Dorsolateral prefrontal cortex (tissue), 120 donors: ENCODE measurements at regions of chr22 and their contacts with region 1.

Region 1: DNA sequence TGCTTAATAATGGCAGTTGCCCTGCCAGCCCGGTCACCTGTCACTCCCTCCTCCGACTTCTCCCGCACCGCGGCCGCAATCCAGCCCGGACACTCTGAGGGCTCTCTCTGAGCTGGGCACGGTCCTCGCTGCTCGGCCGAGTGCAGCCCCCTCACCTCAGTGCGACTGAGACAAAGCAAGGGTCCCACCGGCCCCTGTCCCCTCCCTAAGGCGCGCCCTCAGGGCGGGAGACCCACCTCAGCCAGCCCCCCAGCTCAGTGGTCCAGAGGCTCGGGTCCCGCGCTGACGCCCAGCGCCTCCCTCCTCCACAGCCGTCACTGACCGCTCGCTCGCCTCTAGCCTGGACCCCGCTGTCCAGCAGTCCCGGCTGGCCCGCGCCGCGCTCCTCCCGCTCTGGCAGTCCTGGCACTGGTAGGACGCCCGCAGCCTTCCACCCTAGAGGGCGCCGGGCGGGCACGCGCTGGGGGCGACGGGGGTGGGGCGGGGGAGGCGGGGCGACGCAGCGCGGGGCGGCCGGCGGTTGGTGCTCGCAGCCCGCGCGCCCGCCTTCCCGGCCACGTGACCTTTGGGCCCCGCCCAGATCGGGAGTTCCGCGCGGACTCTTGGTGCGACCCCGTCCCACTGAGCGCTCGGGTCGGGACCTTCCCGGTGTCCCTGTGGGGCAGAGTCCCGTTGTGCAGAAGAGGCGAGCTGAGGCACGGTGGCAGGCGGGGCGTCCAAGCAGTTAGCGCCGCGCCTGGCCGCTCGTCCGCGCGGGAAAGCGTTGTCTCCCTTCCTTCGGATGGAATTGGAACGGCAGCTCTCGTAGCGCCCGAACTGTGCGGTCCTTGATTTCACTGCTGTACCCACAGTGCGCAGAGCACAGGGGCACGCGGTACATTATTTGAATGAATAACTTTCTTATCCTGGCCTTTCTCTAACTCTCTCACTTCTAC is 7.8 kb upstream of the L3MBTL2 start:
- DNase-seq: peak; percentile 70 to 91 (median 84)
- H3K4me3 ChIP-seq: peak overlapping the region; percentile 72 to 100 (median 90)
- H3K27ac ChIP-seq: peak overlapping the region in 28 of 59 donors; percentile 17 to 75 (median 52)
- H3K27me3 ChIP-seq: no peaks in the 10 kb centered on the region
- CTCF ChIP-seq: peak in 38 of 56 donors; percentile 5 to 72 (median 40)

Region 2: GRCh38 chr22:40950962-40951794 is 246.1 kb before region 1 on chr22 and contains the start of gene RBX1:
- intact Hi-C with region 1: loop called in 1 of 2 experiments (anchors 10 kb)
- DNase-seq: peak; percentile 96 to 100 (median 98)
- H3K4me3 ChIP-seq: peak within 1 kb of the TSS; percentile 66 to 97 (median 89)
- H3K27ac ChIP-seq: peak within 1 kb of the TSS; percentile 92 to 100 (median 99)
- H3K27me3 ChIP-seq: no peaks in the 10 kb centered on the region
- CTCF ChIP-seq: peak in 10 of 56 donors; percentile 3 to 23 (median 10)
- total RNA-seq, gene RBX1: 33.0 to 73.0 (median 57.3) TPM

Region 3: GRCh38 chr22:41157083-41157482 is 40.2 kb before region 1 on chr22:
- intact Hi-C with region 1: no loop called
- DNase-seq: no peak
- H3K4me3 ChIP-seq: no peak overlapping the region
- H3K27ac ChIP-seq: peak overlapping the region in 3 of 59 donors; percentile 6 to 32 (median 21)
- H3K27me3 ChIP-seq: no peaks in the 10 kb centered on the region
- CTCF ChIP-seq: no peak

Region 4: GRCh38 chr22:41237707-41238569 is 40.6 kb after region 1 on chr22:
- intact Hi-C with region 1: loop called (anchors 5 kb)
- DNase-seq: peak in 5 of 10 donors; percentile 36 to 75 (median 63)
- H3K4me3 ChIP-seq: peak overlapping the region; percentile 11 to 75 (median 49)
- H3K27ac ChIP-seq: peak overlapping the region; percentile 39 to 100 (median 99)
- H3K27me3 ChIP-seq: no peaks in the 10 kb centered on the region
- CTCF ChIP-seq: peak in 42 of 56 donors; percentile 11 to 52 (median 35)

Region 5: DNA sequence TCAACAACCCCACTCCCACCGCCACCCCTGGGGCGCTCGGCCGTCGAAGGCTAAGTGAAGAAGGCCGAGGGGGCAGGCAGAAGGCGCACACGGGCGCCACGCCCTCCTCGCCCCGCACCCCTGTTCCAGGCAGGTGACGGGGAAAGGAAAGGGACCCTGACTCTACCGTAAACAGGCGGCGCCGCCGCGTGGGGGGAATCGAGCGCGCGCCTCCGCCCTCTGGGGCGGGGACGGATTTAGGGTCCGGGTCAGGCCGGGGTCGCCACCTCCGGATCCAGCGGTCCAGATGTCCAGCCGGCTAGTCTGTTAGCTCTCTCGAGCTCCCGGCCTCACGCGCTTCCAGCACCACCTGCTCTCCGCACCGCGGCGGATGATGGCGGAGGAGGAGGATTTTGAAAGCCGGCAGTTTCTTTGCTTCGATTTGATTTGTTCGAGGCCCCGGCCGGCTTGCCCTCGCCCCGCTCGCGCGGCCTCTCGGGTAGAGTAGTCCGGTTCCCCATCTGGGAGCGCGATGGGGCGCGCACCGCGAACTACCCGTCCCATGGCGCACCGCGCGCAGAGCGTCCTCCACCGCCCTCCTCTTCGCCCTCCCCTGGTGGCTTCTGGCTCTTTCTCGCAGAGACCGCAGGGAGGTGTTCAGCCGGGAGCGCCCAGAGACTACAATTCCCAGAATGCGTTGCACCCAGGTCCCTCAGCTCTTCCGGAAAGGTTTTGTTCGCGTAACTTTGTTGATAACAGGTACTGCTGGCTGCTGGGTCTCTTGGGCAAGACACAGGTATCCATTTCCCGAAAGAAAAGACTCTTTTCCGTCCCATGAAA is 88.7 kb after region 1 on chr22 and contains the start of gene RANGAP1:
- intact Hi-C with region 1: loop called in 1 of 2 experiments (anchors 5 kb)
- DNase-seq: peak; percentile 96 to 100 (median 99)
- H3K4me3 ChIP-seq: peak within 1 kb of the TSS; percentile 68 to 99 (median 94)
- H3K27ac ChIP-seq: peak within 1 kb of the TSS; percentile 75 to 99 (median 97)
- H3K27me3 ChIP-seq: no peaks in the 10 kb centered on the region
- CTCF ChIP-seq: peak in 32 of 56 donors; percentile 2 to 66 (median 34)
- total RNA-seq, gene RANGAP1: 115 to 243 (median 177) TPM